ENCODE measurements at regions of chr7 and their contacts with region 1.

Region 1: DNA sequence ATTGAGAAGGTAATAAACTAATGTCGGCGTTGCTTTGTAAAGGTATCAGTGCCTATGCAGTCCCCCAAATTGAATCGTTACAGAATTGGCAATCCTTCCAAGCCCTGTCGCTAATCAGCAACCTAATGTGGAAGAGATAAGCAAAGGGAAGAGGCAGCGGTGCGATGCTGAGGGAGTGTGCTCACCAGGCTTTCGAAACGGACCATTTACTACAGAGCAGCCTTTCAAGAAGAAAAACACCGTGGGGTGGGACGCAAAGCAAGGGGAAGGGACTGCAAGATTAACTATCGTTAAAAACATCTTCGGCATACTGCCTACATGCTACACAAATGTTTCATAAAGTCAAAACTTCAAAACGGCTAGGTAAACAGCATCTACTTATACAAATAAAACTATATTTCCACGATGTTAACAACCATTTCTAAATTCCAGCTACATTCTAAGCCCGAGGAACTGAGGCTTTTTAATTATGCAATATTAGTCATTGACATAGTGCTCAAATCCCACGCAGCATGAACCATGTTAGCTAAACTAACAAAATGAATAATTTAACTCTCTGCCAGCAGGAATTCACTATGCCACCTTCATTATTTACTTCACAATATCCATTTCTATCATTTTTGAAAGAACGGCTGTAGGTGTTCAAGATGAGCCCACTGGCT is 85.2 kb downstream of the CHCHD3 start:
- DNase-seq: no peak
- H3K4me3 ChIP-seq: no peak overlapping the region
- H3K27ac ChIP-seq: no peak overlapping the region
- H3K4me1 ChIP-seq: peaks cover 6 to 10% of the 10 kb centered on the region in 2 donors
- H3K27me3 ChIP-seq: no peaks in the 10 kb centered on the region
- CTCF ChIP-seq: no peak

Region 2: GRCh38 chr7:133051066-133051465 is 54.4 kb after region 1 on chr7:
- intact Hi-C with region 1: loop called (anchors 5 kb)
- DNase-seq: no peak
- H3K4me3 ChIP-seq: no peak overlapping the region
- H3K27ac ChIP-seq: peak overlapping the region in 1 of 2 donors; percentile 80
- H3K4me1 ChIP-seq: peaks cover 3 to 29% of the 10 kb centered on the region in 2 donors
- H3K27me3 ChIP-seq: no peaks in the 10 kb centered on the region
- CTCF ChIP-seq: peak in 1 of 3 experiments; percentile 31